Mammary epithelial cell (primary cell): ENCODE measurements at regions of chr21 and their contacts with region 1.

Region 1: GRCh38 chr21:45478115-45478801 is 64.0 kb downstream of the SLC19A1 start:
- DNase-seq: no peak
- H3K4me3 ChIP-seq: no peak overlapping the region
- H3K27ac ChIP-seq: no peak overlapping the region
- H3K4me1 ChIP-seq: no peaks in the 10 kb centered on the region
- H3K27me3 ChIP-seq: no peaks in the 10 kb centered on the region
- CTCF ChIP-seq: peak; percentile 37 to 60

Region 2: DNA sequence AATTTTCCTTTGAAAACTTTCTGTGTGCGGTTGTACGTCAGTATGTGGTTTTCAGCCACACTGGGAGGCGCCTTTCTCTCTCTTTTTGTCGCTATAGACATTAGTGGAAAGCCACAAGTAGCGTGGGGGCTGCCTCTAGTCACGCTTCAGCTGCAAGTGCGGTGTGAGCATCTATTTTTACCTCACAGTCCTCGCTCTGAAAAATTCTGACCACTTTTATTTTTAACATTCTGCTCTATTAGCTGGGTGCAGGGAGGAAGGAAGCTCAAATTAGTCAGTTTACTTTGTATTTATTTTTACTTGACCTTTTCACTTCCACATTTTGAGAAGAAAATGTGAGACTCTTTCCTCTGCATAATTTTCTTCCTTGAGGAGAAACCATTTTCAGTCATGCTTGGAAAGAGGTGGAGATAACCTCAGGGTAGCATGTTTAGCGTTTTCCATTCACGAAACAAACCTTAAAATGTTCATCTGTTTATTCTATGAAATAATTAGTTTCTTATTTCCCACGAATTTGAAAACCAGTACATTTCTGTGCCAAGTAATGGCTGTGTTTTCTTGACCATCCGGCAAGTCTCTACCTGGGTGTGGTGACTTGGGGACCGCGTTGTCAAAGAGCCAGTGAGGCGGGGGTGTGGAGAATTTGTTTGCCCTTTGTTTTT is 368.3 kb before region 1 on chr21:
- CTCF ChIA-PET with region 1: no interaction called
- dilution Hi-C with region 1: no loop called
- in situ Hi-C with region 1: no loop called
- intact Hi-C with region 1: no loop called
- DNase-seq: no peak
- H3K4me3 ChIP-seq: no peak overlapping the region
- H3K27ac ChIP-seq: no peak overlapping the region
- H3K4me1 ChIP-seq: no peaks in the 10 kb centered on the region
- H3K27me3 ChIP-seq: no peaks in the 10 kb centered on the region
- CTCF ChIP-seq: no peak

Region 3: DNA sequence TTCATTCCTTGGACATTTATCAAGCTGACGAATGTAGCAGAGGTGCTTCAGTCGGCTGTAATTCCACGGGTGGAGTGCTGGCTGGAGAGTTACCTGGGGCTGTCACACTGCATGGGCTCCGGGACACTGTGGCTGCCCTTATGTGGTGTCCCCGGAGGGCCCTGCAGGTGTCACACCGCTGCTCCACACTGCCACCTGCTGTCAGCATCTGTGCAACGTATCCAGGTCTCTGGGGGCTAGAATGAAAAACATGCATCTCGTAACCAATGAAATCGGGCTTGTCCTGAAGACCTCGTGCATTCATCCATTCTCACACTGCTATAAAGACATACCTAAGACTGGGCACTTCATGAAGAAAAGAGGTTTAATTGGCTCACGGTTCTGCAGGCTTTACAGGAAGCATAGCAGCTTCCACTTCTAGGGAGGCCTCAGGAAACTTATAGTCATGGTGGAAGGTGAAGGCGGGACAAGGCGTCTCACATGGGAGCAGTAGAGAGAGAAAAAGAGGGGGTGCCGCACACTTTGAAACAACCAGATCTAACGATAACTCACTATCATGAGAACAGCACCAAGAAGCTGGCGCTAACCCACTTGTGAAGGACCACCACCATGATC is 118.6 kb after region 1 on chr21:
- CTCF ChIA-PET with region 1: no interaction called
- dilution Hi-C with region 1: no loop called
- in situ Hi-C with region 1: no loop called
- intact Hi-C with region 1: loop called (anchors 10 kb)
- DNase-seq: peak; percentile 21
- H3K4me3 ChIP-seq: no peak overlapping the region
- H3K27ac ChIP-seq: no peak overlapping the region
- H3K4me1 ChIP-seq: no peaks in the 10 kb centered on the region
- H3K27me3 ChIP-seq: no peaks in the 10 kb centered on the region
- CTCF ChIP-seq: peak; percentile 82 to 93